Gastrocnemius medialis (tissue), 4 donors: ENCODE measurements at regions of chr9 and their contacts with region 1.

Region 1: DNA sequence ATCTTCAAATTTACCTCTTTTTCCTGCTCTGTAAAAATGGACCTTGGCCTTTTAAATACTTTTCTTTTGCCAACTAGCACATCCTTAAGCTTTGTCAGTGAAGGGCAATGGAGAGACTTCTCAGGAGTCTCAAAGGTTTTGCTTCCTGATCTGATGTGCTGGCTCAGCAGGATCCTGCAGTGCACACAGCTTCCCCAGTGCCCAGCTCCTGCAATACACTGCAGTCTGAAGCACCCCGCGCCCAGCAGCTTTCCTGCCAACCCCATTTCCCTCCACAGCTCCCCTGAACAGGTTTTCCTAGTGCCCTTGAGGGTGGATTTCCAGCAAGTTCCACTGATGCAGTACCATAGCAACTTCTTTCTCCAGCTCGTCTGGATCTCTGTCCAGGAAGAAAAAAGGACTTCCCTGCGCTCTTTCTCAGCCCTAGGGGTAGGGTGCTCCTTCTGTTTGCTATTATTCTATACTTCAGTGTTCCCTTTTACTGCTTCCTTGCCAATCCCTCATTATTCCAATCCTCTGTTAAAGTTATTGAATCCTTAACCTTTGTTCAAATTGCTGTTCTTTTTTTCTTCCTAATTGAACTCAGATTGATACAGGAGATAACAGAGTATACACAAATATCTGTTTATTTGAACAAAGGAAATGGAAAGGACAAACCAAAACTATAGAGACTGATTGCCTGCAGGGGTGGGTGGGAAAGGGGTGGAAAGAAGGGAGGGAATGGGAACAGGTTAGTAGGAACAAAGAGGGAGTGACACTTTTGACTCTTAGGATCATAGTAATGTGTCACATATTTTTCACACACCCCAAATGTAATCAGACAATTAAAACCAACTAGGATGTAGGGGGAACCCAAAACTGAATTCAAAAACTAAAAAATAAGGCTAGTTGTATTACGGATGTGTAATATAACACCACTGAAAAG is 8.5 kb downstream of the SNAPC3 start:
- DNase-seq: no peak
- ATAC-seq: no peak
- H3K4me3 ChIP-seq: no peak overlapping the region
- H3K27ac ChIP-seq: no peak overlapping the region
- H3K4me1 ChIP-seq: no peaks in the 10 kb centered on the region
- H3K27me3 ChIP-seq: no peaks in the 10 kb centered on the region
- CTCF ChIP-seq: no peak
- POLR2A ChIP-seq: no peak

Region 2: DNA sequence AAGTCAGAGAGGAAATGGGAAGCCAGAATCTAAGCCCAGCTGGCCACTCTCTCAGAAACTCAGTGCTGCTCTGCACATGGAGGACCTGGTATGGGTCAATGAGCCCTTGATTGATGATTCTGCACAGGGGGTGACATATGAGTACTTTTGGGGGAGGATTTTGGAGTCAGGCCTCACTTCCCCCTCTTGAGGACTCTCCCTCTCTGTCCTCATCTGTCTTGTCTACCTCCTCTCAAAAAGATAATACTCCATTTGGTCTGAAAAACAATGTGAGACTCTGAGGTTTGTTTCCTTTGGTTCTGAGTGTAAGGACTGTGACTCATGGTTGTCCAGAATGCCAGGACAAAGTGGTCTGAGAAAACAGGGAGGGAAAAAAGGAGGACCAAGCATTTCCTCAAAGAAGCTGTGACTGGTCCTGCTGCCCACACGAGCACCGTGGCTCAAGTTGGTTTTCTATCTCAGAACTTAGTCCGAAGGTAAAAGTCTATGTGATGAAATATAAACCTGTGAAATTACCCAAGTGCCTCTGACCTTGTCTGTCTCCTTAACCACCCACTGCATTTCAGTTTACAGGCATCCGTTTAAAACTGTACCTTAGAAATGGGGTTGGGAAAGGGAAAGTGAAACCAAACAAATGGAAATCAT is 135.3 kb before region 1 on chr9:
- in situ Hi-C with region 1: loop called in 1 of 4 experiments (anchors 10 kb)
- intact Hi-C with region 1: no loop called
- DNase-seq: no peak
- ATAC-seq: peak; percentile 70 to 76
- H3K4me3 ChIP-seq: peak overlapping the region; percentile 23 to 76 (median 50)
- H3K27ac ChIP-seq: peak overlapping the region; percentile 70 to 83 (median 76)
- H3K4me1 ChIP-seq: peaks cover 15 to 23% of the 10 kb centered on the region in 2 donors
- H3K27me3 ChIP-seq: no peaks in the 10 kb centered on the region
- CTCF ChIP-seq: no peak
- POLR2A ChIP-seq: no peak

Region 3: GRCh38 chr9:15317836-15318235 is 113.3 kb before region 1 on chr9:
- in situ Hi-C with region 1: no loop called
- intact Hi-C with region 1: no loop called
- DNase-seq: no peak
- ATAC-seq: no peak
- H3K4me3 ChIP-seq: no peak overlapping the region
- H3K27ac ChIP-seq: no peak overlapping the region
- H3K4me1 ChIP-seq: no peaks in the 10 kb centered on the region
- H3K27me3 ChIP-seq: no peaks in the 10 kb centered on the region
- CTCF ChIP-seq: no peak
- POLR2A ChIP-seq: no peak